ENCODE measurements at regions of chr2 and their contacts with region 1.

Region 1: GRCh38 chr2:17588031-17588430 is 47.5 kb downstream of the VSNL1 start:
- DNase-seq: peak; percentile 98
- H3K4me3 ChIP-seq: peak overlapping the region in 1 of 3 experiments; percentile 4
- H3K27ac ChIP-seq: peak overlapping the region; percentile 98
- H3K4me1 ChIP-seq: peaks cover 68% of the 10 kb centered on the region
- H3K27me3 ChIP-seq: no peaks in the 10 kb centered on the region
- CTCF ChIP-seq: no peak

Region 2: DNA sequence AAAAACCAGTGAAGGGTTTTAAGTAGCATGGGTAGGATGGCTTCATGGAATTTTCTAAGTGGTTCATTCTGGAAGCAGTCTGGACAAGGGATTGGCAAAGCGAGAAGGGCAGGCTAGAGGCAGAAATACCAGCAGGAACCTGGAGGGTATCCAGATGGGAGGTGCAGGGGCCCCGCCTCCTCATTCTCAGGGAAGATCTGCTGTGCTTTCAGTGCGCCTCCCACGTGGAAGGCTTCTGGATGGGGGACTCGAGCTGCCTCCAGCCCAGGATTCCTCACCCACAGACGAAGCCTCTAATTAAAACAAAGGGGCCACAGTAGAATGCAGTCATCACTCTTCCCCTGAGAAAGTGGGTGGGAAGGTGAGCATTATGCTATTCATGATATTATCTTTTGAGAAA is 32.2 kb after region 1 on chr2:
- CTCF ChIA-PET with region 1: no interaction called
- dilution Hi-C with region 1: loop called (anchors 5 kb)
- in situ Hi-C with region 1: no loop called
- intact Hi-C with region 1: loop called (anchors 2 kb)
- DNase-seq: peak; percentile 91
- H3K4me3 ChIP-seq: peak overlapping the region; percentile 25 to 31 (median 28)
- H3K27ac ChIP-seq: peak overlapping the region; percentile 88
- H3K4me1 ChIP-seq: peaks cover 46% of the 10 kb centered on the region
- H3K27me3 ChIP-seq: no peaks in the 10 kb centered on the region
- CTCF ChIP-seq: no peak

Region 3: GRCh38 chr2:17628349-17629261 is 40.6 kb after region 1 on chr2:
- CTCF ChIA-PET with region 1: no interaction called
- dilution Hi-C with region 1: loop called (anchors 5 kb)
- in situ Hi-C with region 1: no loop called
- intact Hi-C with region 1: no loop called
- DNase-seq: peak; percentile 44
- H3K4me3 ChIP-seq: no peak overlapping the region
- H3K27ac ChIP-seq: no peak overlapping the region
- H3K4me1 ChIP-seq: peaks cover 23% of the 10 kb centered on the region
- H3K27me3 ChIP-seq: no peaks in the 10 kb centered on the region
- CTCF ChIP-seq: no peak

Region 4: DNA sequence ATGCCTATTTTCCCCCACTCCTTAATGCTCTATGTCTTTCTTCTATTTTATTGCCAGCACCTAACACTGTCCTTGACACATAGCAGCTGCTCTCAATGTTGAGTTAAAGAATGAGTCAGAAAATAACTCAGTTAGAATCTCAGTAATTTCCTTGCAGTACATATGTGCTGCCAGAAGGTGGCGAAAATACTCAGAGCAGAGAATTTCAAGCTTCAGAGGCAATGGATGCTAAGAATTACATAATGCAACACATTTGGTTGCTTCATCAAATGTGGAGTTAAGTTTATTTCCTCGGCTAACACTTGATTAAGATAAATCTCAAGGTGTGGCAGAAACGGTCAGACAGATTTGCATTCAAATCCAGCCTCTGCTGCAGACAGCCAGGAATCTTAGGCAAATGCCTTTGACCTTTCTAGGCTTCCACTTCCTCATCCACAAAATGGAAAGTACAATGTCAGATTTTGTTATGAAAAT is 58.1 kb after region 1 on chr2:
- CTCF ChIA-PET with region 1: interaction called, 4 read pairs
- dilution Hi-C with region 1: no loop called
- in situ Hi-C with region 1: no loop called
- intact Hi-C with region 1: loop called (anchors 1 kb)
- DNase-seq: peak; percentile 84
- H3K4me3 ChIP-seq: no peak overlapping the region
- H3K27ac ChIP-seq: peak overlapping the region; percentile 28
- H3K4me1 ChIP-seq: peaks cover 37% of the 10 kb centered on the region
- H3K27me3 ChIP-seq: no peaks in the 10 kb centered on the region
- CTCF ChIP-seq: peak; percentile 77 to 90

Measured in mammary epithelial cell (primary cell).